HepG2 (cell line): ENCODE measurements at regions of chr3 and their contacts with region 1.

Region 1: DNA sequence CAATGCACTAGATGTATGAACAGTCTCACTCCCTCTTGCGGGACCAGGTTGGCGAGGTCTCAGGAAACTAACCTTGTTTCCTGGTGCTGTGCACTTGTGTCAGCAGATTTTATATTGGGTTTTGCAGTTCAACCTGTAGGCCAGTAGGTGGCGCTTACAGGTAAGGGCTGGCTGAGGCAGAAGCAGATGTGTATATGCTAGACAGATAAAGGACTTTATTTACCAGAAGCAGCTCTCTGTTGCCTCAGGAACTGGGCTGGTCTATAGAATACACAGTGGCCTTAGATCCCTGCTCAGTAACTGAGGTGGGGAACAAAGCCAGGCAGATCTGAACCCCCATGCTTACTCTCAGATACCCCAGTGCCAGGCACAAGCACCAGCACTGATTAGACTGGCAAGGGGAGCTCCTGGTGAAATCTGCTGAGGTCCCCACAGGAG is 296.8 kb downstream of the DOCK3 start:
- DNase-seq: peak; percentile 68
- ATAC-seq: peak; percentile 94
- H3K4me3 ChIP-seq: no peak overlapping the region
- H3K27ac ChIP-seq: no peak overlapping the region
- H3K4me1 ChIP-seq: no peaks in the 10 kb centered on the region
- H3K27me3 ChIP-seq: no peaks in the 10 kb centered on the region
- CTCF ChIP-seq: peak; percentile 91
- EP300 ChIP-seq: no peak
- POLR2A ChIP-seq: no peak
- RAD21 ChIP-seq: peak; percentile 84

Region 2: GRCh38 chr3:50950591-50950990 is 20.9 kb before region 1 on chr3:
- CTCF ChIA-PET with region 1: no interaction called
- POLR2A ChIA-PET with region 1: no interaction called
- in situ Hi-C with region 1: no loop called
- intact Hi-C with region 1: no loop called
- DNase-seq: no peak
- ATAC-seq: no peak
- H3K4me3 ChIP-seq: no peak overlapping the region
- H3K27ac ChIP-seq: no peak overlapping the region
- H3K4me1 ChIP-seq: no peaks in the 10 kb centered on the region
- H3K27me3 ChIP-seq: no peaks in the 10 kb centered on the region
- CTCF ChIP-seq: no peak
- EP300 ChIP-seq: no peak
- POLR2A ChIP-seq: no peak
- RAD21 ChIP-seq: no peak

Region 3: DNA sequence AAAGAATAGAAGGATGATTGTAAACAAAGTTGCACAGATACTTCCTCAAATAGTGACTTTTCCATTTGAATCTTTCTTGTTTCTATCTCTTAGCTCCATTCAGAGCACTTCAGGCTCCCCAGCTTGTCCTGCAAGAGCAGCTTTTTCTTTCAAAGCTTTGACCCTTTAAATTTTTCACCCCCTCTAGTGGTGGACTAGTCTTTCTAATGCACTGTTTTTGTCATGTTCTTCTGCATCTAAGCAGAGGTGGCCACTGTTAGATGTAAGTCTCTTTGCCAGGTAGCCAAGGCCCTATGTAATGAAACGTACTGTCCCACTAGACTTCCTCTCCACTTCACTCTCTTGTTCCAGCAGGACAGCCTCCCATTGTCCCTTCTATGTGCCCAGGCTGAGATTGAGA is 339.5 kb after region 1 on chr3:
- CTCF ChIA-PET with region 1: interaction called, 6 read pairs
- POLR2A ChIA-PET with region 1: no interaction called
- in situ Hi-C with region 1: no loop called
- intact Hi-C with region 1: loop called (anchors 2 kb)
- DNase-seq: peak; percentile 28
- ATAC-seq: peak; percentile 52; the same call in 2 of the 3 replicates
- H3K4me3 ChIP-seq: no peak overlapping the region
- H3K27ac ChIP-seq: no peak overlapping the region
- H3K4me1 ChIP-seq: no peaks in the 10 kb centered on the region
- H3K27me3 ChIP-seq: 0 out of 5 replicates have a peak, but pooled peaks cover 0 to 2% of the 10 kb centered on the region in 2 experiments
- CTCF ChIP-seq: peak; percentile 48
- EP300 ChIP-seq: no peak
- POLR2A ChIP-seq: no peak
- RAD21 ChIP-seq: no peak

Region 4: GRCh38 chr3:51371943-51372557 is 400.5 kb after region 1 on chr3:
- CTCF ChIA-PET with region 1: interaction called, 23 read pairs
- POLR2A ChIA-PET with region 1: no interaction called
- in situ Hi-C with region 1: loop called (anchors 5 kb)
- intact Hi-C with region 1: loop called (anchors 2 kb)
- DNase-seq: peak; percentile 55
- ATAC-seq: peak; percentile 77
- H3K4me3 ChIP-seq: no peak overlapping the region
- H3K27ac ChIP-seq: no peak overlapping the region
- H3K4me1 ChIP-seq: no peaks in the 10 kb centered on the region
- H3K27me3 ChIP-seq: peaks cover 7 to 39% of the 10 kb centered on the region in 2 experiments; a peak in 4 of 5 replicates
- CTCF ChIP-seq: peak; percentile 79
- EP300 ChIP-seq: no peak
- POLR2A ChIP-seq: no peak
- RAD21 ChIP-seq: peak; percentile 78